CD14-positive monocyte (primary cell): ENCODE measurements at regions of chr1 and their contacts with region 1.

Region 1: DNA sequence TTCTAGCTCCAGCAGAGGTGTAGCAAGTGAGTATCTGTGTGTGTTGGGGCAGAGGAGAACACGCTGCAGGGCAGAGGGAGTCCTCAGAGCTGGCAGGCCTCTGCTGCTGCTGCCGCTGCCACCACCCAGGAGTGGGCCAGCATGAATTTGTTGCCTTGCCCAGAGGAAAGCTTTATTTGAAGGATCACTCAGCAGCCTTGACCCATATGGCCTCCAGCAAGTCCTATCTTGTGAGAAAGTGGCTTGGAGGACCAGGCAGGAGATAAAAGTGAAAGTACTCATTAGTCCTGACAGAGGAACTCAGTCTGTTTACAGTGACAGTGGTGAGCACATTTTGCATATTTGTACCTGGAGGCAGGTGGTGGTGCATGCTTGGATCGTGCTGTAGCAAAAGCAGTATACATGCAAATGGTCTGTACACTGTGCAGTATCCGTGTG is 3.1 kb downstream of the TRAF5 start:
- DNase-seq: no peak
- H3K4me3 ChIP-seq: no peak overlapping the region
- H3K4me3 Mint-ChIP-seq: peak overlapping the region in 1 of 2 donors; percentile 7
- H3K27ac ChIP-seq: no peak overlapping the region
- H3K27ac Mint-ChIP-seq: peak overlapping the region in 2 of 7 donors; percentile 10 to 70
- H3K4me1 ChIP-seq: peaks cover 11 to 12% of the 10 kb centered on the region in 2 donors
- H3K4me1 Mint-ChIP-seq: peaks cover 29% of the 10 kb centered on the region
- H3K27me3 ChIP-seq: no peaks in the 10 kb centered on the region
- H3K27me3 Mint-ChIP-seq: peaks cover 11 to 25% (median 21%) of the 10 kb centered on the region in 3 donors
- CTCF ChIP-seq: no peak

Region 2: GRCh38 chr1:211476200-211476849 is 146.5 kb after region 1 on chr1:
- intact Hi-C with region 1: loop called (anchors 5 to 10 kb)
- DNase-seq: peak; percentile 40 to 52 (median 50)
- H3K4me3 ChIP-seq: no peak overlapping the region
- H3K4me3 Mint-ChIP-seq: no peak overlapping the region
- H3K27ac ChIP-seq: no peak overlapping the region
- H3K27ac Mint-ChIP-seq: peak overlapping the region in 1 of 7 donors; percentile 5
- H3K4me1 ChIP-seq: no peaks in the 10 kb centered on the region
- H3K4me1 Mint-ChIP-seq: peaks cover 6% of the 10 kb centered on the region
- H3K27me3 ChIP-seq: peaks cover 9 to 18% of the 10 kb centered on the region in 2 donors
- H3K27me3 Mint-ChIP-seq: peaks cover 17 to 27% (median 19%) of the 10 kb centered on the region in 3 donors
- CTCF ChIP-seq: peak; percentile 81